Dorsolateral prefrontal cortex (tissue), 120 donors: ENCODE measurements at regions of chr12 and their contacts with region 1.

Region 1: DNA sequence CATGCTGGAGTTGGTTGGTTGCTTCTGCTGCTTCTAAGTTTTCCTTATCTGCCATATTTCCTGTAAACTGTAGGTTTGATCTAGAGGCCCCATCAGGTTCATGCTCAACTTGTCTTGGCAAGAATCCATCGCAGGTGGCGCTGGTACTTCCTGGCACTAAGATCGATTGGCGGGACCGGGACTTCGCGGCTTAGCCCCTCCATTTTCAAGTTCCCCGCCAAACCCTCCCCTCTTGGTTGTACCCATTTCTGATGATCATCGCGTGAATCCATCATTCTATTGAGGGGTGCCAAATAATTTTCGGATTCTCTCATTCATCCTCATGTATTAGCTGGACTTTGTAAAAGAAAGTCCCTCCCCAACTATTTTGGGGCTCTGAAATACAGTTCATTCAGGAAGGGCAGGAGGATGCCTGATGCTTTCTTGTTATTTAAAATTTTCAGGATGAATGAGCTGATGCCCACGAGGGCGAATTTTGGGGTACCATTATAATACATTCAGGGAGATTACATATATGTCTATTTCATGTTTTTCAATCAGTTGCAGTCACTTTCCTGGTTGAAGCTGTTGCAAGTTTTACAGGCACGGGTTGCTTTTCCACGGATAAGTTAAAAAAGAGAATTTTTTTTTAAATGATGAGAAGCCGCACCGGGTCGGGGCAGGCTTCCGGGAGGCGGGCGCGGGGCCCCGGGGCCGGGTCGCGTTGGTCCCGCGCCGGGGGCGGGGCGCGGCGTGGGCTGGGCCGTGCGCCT is 395 bp upstream of the BRI3BP start:
- DNase-seq: peak in 4 of 10 donors; percentile 15 to 80 (median 45)
- H3K4me3 ChIP-seq: peak overlapping the region; percentile 32 to 82 (median 66)
- H3K27ac ChIP-seq: peak overlapping the region in 37 of 59 donors; percentile 4 to 75 (median 48)
- H3K27me3 ChIP-seq: no peaks in the 10 kb centered on the region
- CTCF ChIP-seq: peak in 5 of 56 donors; percentile 6 to 32 (median 12)

Region 2: DNA sequence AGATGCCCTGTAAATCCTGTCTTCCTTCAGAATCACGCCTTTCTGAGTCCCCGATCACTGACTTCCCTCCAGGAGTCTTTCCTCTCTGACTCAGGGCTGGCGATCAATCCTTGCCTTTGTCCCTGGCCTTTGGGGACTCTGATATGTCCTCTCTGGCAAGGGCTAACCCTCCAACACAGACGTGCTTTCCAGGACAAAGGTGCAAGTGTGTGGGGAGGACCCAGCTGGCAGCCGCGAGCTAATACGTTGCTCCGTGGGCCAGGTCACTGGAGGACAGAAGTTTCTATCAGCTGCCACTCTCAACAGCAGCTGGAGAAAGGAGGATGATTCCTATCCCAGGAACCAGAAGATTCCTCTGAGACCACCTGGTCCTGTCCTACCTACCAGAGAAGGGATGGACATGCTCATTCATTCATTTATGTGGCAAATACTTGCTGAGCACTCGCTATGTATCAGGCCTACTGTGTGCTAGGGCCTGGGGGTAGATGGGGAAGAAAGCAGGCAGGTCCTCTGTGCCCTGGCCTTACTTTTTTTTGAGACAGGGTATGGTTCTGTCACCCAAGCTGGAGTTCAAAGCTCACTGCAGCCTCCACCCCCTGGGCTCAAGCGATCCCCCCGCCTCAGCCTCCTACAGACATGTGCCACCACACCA is 120.9 kb before region 1 on chr12:
- intact Hi-C with region 1: no loop called
- DNase-seq: no peak
- H3K4me3 ChIP-seq: no peak overlapping the region
- H3K27ac ChIP-seq: no peak overlapping the region
- H3K27me3 ChIP-seq: no peaks in the 10 kb centered on the region
- CTCF ChIP-seq: no peak

Region 3: GRCh38 chr12:124947561-124948398 is 45.3 kb before region 1 on chr12:
- intact Hi-C with region 1: no loop called
- DNase-seq: peak in 1 of 10 donors; percentile 41
- H3K4me3 ChIP-seq: no peak overlapping the region
- H3K27ac ChIP-seq: peak overlapping the region in 4 of 59 donors; percentile 2 to 76 (median 19)
- H3K27me3 ChIP-seq: no peaks in the 10 kb centered on the region
- CTCF ChIP-seq: no peak

Region 4: GRCh38 chr12:125049093-125049458 is 56.0 kb after region 1 on chr12:
- intact Hi-C with region 1: loop called (anchors 5 kb)
- DNase-seq: no peak
- H3K4me3 ChIP-seq: peak overlapping the region; percentile 43 to 91 (median 75)
- H3K27ac ChIP-seq: peak overlapping the region in 53 of 59 donors; percentile 12 to 93 (median 76)
- H3K27me3 ChIP-seq: no peaks in the 10 kb centered on the region
- CTCF ChIP-seq: no peak